AG04450 (cell line): ENCODE measurements at regions of chr5 and their contacts with region 1.

Region 1: DNA sequence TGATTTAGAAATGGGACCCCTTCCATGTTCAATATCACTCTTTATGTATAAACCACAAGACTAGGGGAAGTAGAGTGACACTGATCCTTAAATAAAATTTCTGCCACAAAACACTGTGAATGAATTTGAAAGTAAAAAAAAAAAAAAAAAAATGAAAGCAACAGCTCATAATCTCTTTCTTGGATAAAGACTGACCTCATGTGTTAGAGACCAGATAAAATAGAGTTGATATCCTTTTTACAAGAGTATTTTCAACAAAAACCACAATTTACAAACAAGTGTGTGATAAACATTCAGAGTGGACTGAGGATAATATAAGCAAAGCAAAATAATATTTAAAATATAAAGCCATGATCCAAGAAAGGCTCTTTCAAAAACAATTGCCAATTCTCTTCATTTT is 180.2 kb downstream of the FBXL17 start:
- DNase-seq: no peak
- H3K4me3 ChIP-seq: no peak overlapping the region
- H3K27ac ChIP-seq: no peak overlapping the region
- H3K27me3 ChIP-seq: no peaks in the 10 kb centered on the region
- CTCF ChIP-seq: no peak

Region 2: DNA sequence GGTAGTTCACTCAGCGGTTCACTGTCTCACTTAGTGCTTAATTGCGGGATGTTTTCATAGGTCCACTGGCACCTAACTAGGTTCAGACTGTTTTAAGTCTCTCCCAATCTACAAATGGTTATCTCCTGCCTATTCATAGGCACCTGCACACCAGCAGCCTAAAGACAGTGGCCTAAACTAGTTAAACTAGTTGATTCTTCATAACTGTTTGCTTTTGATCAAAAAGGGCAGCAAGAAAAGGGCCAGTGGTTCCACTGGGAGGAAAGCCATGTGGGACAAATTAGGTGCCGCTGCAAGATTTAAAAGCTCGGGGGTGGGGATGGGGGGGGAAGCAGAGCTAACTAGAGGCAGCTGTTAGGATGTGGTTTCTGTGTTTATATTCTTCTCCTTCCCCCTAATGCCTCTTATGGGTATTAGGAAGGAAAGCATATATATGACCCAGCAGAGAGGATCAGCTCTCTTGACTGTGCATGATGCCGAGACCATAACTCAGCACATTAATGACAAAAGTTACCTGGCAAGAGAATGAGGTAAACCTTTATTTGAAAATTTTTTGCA is 596.8 kb before region 1 on chr5:
- CTCF ChIA-PET with region 1: interaction called, 14 read pairs
- POLR2A ChIA-PET with region 1: no interaction called
- DNase-seq: no peak
- H3K4me3 ChIP-seq: no peak overlapping the region
- H3K27ac ChIP-seq: no peak overlapping the region
- H3K27me3 ChIP-seq: no peaks in the 10 kb centered on the region
- CTCF ChIP-seq: no peak

Region 3: DNA sequence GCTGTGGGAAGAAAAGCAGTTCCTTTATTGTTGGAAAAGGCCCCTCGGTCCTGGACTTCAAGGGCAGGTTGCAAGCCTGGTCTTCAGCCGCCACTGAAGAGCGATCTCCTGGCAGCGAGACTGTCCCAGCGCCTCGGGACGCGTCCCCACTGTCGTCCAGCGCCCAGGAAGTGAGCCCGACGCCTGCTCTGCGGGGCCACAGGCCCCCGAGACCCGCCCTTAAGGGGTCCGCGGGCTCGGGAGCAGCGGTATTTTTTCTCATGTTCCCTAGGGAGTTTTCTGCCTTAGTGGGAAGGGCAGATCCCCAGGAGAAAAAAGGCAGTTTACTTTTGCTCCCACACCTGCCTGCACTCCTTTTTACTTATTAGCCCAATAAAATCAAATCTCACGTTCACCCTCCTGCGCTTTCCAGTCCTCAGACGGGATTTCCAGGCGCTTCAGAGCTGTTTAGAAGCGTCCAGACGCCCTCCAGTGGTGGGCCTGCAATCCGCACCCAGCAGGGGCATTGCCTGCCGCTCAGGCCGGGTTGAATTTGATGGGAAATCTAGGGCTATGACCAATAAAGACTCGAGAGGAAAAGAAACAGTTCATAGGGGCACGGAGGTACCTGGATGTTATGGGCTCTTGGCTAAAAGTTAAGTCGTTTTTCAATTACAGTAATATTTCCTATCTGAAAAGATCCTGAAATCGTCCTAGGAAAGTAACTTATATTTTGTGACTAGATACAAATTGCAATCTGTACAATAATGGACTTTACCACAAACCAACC is 528.2 kb before region 1 on chr5:
- CTCF ChIA-PET with region 1: interaction called, 11 read pairs
- POLR2A ChIA-PET with region 1: no interaction called
- DNase-seq: peak; percentile 68
- H3K4me3 ChIP-seq: peak overlapping the region; percentile 70
- H3K27ac ChIP-seq: no peak overlapping the region
- H3K27me3 ChIP-seq: peaks cover 11% of the 10 kb centered on the region
- CTCF ChIP-seq: peak; percentile 99

Region 4: DNA sequence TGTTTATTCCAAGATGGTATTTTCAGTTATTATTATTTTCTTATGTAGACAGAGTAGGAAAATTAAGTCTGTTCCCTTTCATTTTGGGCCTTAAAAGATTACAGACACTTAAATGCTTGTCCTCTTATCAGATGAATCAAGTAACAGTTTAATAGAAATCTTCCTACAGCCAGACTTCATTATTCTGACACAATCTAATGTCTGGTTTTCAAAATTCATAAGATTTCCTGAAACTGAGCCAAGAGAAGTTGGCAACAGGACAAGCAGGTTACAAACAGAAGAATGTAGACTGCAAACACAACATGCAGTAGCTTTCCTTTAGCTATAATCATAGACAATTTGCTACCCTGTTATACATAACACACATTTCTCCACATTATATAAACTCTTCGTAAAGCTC is 49.6 kb after region 1 on chr5:
- CTCF ChIA-PET with region 1: no interaction called
- POLR2A ChIA-PET with region 1: no interaction called
- DNase-seq: no peak
- H3K4me3 ChIP-seq: no peak overlapping the region
- H3K27ac ChIP-seq: no peak overlapping the region
- H3K27me3 ChIP-seq: no peaks in the 10 kb centered on the region
- CTCF ChIP-seq: no peak